HEK293 (cell line): ENCODE measurements at regions of chr2 and their contacts with region 1.

Region 1: DNA sequence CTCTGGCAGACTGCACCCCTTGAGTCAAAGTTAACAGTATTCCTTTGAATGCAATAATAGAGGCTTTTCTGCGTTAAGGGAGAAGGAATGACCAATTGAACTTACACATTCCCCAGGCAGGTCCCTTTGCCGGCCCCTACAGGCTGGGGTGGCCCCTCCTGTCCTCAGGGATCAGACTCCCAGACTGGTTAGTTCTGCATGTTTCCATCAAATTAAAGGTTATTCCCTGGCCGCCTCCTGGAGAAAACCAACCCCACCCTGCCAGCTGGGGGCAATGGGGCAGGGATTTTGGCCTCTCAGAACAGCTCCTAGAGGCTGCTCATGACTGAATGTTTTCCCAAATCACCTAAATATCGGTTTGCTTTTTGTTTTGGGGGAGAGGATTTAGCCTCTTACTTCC is 199.6 kb downstream of the MGAT5 start:
- H3K4me3 ChIP-seq: no peak overlapping the region
- H3K27ac ChIP-seq: no peak overlapping the region
- H3K4me1 ChIP-seq: no peaks in the 10 kb centered on the region
- CTCF ChIP-seq: no peak

Region 2: GRCh38 chr2:133867166-133867565 is 586.3 kb before region 1 on chr2:
- CTCF ChIA-PET with region 1: interaction called, 10 read pairs
- POLR2A ChIA-PET with region 1: no interaction called
- H3K4me3 ChIP-seq: no peak overlapping the region
- H3K27ac ChIP-seq: no peak overlapping the region
- H3K4me1 ChIP-seq: no peaks in the 10 kb centered on the region
- CTCF ChIP-seq: no peak

Region 3: DNA sequence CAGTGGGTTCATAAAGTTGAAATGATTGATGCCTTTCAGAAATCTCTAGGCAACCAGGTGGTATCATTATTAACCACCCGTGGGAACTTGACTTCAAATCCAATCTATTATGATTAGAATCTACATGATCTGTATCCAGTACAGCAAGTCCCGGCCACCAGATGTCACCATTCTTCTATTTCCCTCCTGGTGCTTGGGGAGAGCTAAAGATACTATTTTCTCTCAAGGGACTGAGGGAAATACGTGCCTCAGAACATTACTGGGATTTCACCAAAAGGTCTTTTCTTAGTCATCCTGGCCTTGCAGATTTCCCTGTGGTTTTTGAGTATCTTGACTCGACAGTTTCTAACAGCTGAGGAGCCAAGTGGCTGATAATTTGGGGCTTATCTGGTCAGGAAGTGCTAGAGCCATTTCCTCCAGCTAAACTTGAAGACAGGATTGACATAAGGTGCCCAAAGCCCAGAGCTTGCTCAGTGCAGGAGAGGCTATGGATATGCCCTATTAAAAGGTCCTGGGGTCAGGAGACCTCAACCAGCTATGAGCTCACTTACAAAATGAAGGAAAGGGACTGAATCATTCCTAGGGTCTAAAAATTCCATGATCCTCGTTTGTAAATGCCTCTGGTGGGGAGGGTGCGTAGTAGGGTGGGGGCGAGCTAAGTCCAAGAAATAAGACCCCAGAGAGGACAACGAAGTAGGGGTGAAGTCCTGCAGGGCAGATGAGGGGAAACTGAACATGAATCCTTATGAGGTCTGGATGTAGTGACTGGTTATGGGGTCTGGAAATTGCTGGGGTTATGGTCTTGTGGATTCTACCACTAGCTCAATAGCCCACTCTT is 335.0 kb before region 1 on chr2:
- CTCF ChIA-PET with region 1: interaction called, 52 read pairs
- POLR2A ChIA-PET with region 1: no interaction called
- H3K4me3 ChIP-seq: no peak overlapping the region
- H3K27ac ChIP-seq: no peak overlapping the region
- H3K4me1 ChIP-seq: peaks cover 13% of the 10 kb centered on the region
- CTCF ChIP-seq: peak; percentile 40; the same call in 1 of the 2 replicates

Region 4: GRCh38 chr2:134431838-134432434 is 21.5 kb before region 1 on chr2:
- CTCF ChIA-PET with region 1: interaction called, 14 read pairs
- POLR2A ChIA-PET with region 1: no interaction called
- H3K4me3 ChIP-seq: no peak overlapping the region
- H3K27ac ChIP-seq: no peak overlapping the region
- H3K4me1 ChIP-seq: no peaks in the 10 kb centered on the region
- CTCF ChIP-seq: no peak

Region 5: DNA sequence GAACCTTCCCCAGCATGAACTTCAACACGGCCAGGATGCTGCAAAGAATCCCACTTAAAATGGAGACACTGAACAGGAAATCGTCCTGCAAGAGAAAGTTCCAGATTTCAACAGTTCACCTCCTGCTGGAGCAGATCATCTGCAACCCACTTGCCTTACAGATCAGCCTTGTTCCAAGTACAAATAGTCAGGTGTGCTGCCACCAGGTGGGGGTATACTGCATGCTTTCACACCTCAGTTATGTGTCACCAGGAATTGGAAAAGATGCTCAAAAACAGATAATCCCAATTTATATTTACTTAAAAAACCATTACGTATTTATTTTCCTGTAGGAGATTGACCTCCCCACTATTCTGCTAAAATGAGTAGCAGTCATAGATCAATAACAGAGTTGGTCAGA is 12.7 kb after region 1 on chr2:
- CTCF ChIA-PET with region 1: interaction called, 19 read pairs
- POLR2A ChIA-PET with region 1: no interaction called
- H3K4me3 ChIP-seq: no peak overlapping the region
- H3K27ac ChIP-seq: no peak overlapping the region
- H3K4me1 ChIP-seq: no peaks in the 10 kb centered on the region
- CTCF ChIP-seq: peak; percentile 37; the same call in 1 of the 2 replicates

Region 6: GRCh38 chr2:134873152-134873551 is 419.7 kb after region 1 on chr2:
- CTCF ChIA-PET with region 1: no interaction called
- POLR2A ChIA-PET with region 1: no interaction called
- H3K4me3 ChIP-seq: no peak overlapping the region
- H3K27ac ChIP-seq: no peak overlapping the region
- H3K4me1 ChIP-seq: no peaks in the 10 kb centered on the region
- CTCF ChIP-seq: no peak

Region 7: GRCh38 chr2:134892282-134893070 is 439.0 kb after region 1 on chr2:
- CTCF ChIA-PET with region 1: interaction called, 17 read pairs
- POLR2A ChIA-PET with region 1: no interaction called
- H3K4me3 ChIP-seq: no peak overlapping the region
- H3K27ac ChIP-seq: no peak overlapping the region
- H3K4me1 ChIP-seq: no peaks in the 10 kb centered on the region
- CTCF ChIP-seq: no peak